ENCODE measurements at regions of chr1 and their contacts with region 1.

Region 1: DNA sequence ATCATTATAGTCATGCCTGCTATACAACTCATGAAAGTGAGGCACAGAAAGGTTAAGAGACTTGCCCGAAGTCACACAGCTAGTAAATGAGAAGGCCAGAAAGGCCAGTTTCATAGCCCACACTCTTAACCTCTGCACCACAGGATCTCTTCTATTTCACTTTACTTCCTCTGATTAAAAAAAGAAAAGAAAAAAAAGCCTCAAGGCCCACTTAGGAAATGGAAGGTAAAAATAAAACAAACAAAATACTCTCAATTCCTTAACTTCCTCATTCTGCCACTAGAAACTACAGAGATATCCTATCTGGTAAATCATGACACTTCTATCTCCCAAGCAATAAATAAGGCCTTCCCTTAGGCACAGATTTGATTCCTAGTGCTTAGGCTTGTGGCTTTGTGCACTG is 7.6 kb upstream of the ENAH start:
- DNase-seq: no peak
- ATAC-seq: no peak
- H3K4me3 ChIP-seq: no peak overlapping the region
- H3K27ac ChIP-seq: no peak overlapping the region
- H3K4me1 ChIP-seq: no peaks in the 10 kb centered on the region
- H3K27me3 ChIP-seq: no peaks in the 10 kb centered on the region

Region 2: DNA sequence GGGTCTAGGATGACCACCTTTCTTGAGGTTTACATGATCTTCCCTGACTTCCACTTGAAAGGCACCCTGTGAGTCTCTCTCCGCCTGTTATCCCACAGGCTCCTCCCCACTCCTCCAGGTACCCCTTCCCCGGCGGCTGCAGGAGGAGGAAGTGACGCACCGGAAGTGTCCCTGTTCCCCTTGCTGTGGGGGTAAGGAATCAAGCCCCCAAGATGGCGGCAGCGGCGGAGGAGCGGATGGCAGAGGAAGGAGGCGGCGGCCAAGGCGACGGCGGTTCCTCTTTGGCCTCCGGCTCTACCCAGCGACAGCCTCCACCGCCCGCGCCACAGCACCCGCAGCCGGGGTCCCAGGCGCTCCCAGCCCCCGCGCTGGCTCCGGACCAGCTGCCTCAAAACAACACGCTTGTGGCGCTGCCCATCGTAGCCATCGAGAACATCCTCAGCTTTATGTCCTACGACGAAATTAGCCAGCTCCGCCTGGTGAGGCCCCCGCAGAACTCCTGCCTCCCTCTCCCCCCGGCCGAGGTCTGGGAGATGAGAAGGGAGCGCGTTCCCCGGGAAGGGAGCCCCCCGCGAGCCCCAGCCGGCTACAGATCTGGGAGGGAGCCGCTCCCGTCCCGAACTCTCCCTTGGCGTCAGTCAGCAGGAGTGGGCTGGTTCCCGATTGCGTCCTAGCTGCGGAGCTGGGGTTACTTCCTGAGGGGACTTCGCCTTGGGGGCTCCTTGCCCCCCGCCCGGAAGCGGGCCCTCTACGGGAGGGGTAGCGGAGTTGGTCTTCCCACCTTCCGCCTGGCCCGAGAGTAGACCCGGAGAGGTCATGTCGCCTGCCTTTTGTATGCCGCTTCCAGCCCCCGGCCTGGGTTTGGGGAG is 1546.4 kb before region 1 on chr1 and contains the start of gene FBXO28:
- intact Hi-C with region 1: no loop called
- DNase-seq: peak; percentile 96 to 97 (median 97)
- ATAC-seq: peak; percentile 100
- H3K4me3 ChIP-seq: peak within 1 kb of the TSS; percentile 59
- H3K27ac ChIP-seq: peak within 1 kb of the TSS; percentile 55
- H3K4me1 ChIP-seq: no peaks in the 10 kb centered on the region
- H3K27me3 ChIP-seq: no peaks in the 10 kb centered on the region
- total RNA-seq, gene FBXO28: 16.6 to 19.9 (median 19.4) TPM

Region 3: GRCh38 chr1:225519166-225519863 is 141.2 kb before region 1 on chr1:
- intact Hi-C with region 1: no loop called
- DNase-seq: peak; percentile 34 to 75 (median 71)
- ATAC-seq: peak in 1 of 2 donors; percentile 65
- H3K4me3 ChIP-seq: no peak overlapping the region
- H3K27ac ChIP-seq: no peak overlapping the region
- H3K4me1 ChIP-seq: no peaks in the 10 kb centered on the region
- H3K27me3 ChIP-seq: no peaks in the 10 kb centered on the region

Region 4: GRCh38 chr1:225754940-225755641 is 94.5 kb after region 1 on chr1:
- intact Hi-C with region 1: loop called in 2 of 4 experiments (anchors 10 kb)
- DNase-seq: peak; percentile 79 to 91 (median 86)
- ATAC-seq: peak; percentile 91 to 92
- H3K4me3 ChIP-seq: no peak overlapping the region
- H3K27ac ChIP-seq: peak overlapping the region; percentile 64
- H3K4me1 ChIP-seq: peaks cover 13% of the 10 kb centered on the region
- H3K27me3 ChIP-seq: no peaks in the 10 kb centered on the region

Measured in right cardiac atrium (tissue), 5 donors.